Activated CD4-positive, alpha-beta memory T cell treated with anti-CD3 and anti-CD28 coated beads for 36 hours (primary cell): ENCODE measurements at regions of chr17 and their contacts with region 1.

Region 1: DNA sequence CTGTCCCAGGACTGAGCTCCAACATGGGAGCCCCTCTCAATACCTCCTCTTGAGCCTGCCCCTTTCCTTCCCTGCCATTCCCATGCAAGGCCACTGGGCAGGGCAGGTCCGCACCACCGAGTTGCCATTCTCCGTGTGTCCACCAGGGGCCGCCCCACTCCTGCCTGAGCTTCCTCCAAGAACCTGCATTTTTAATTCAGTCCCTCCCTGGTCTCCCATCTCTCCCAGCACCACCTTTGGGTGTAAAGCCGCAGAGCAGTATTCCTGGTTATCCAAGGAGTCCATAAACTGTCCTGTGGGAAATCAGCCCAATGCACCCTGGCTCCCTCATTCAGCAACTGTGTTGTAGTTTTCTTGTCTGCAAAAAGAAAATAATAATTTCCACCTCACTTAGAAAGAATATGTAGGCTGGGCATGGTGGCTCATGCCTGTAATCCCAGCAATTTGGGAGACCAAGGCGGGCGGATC is 15.9 kb upstream of the ANKRD40CL start:
- DNase-seq: peak; percentile 89
- H3K4me3 Mint-ChIP-seq: peak overlapping the region; percentile 17
- H3K27ac Mint-ChIP-seq: peak overlapping the region; percentile 49
- H3K4me1 Mint-ChIP-seq: peaks cover 22% of the 10 kb centered on the region
- H3K27me3 Mint-ChIP-seq: peaks cover 3% of the 10 kb centered on the region

Region 2: GRCh38 chr17:50754521-50754920 is 28.7 kb before region 1 on chr17:
- CTCF ChIA-PET with region 1: interaction called, 12 read pairs
- POLR2A ChIA-PET with region 1: no interaction called
- intact Hi-C with region 1: no loop called
- DNase-seq: no peak
- H3K4me3 Mint-ChIP-seq: no peak overlapping the region
- H3K27ac Mint-ChIP-seq: no peak overlapping the region
- H3K4me1 Mint-ChIP-seq: no peaks in the 10 kb centered on the region
- H3K27me3 Mint-ChIP-seq: no peaks in the 10 kb centered on the region

Region 3: DNA sequence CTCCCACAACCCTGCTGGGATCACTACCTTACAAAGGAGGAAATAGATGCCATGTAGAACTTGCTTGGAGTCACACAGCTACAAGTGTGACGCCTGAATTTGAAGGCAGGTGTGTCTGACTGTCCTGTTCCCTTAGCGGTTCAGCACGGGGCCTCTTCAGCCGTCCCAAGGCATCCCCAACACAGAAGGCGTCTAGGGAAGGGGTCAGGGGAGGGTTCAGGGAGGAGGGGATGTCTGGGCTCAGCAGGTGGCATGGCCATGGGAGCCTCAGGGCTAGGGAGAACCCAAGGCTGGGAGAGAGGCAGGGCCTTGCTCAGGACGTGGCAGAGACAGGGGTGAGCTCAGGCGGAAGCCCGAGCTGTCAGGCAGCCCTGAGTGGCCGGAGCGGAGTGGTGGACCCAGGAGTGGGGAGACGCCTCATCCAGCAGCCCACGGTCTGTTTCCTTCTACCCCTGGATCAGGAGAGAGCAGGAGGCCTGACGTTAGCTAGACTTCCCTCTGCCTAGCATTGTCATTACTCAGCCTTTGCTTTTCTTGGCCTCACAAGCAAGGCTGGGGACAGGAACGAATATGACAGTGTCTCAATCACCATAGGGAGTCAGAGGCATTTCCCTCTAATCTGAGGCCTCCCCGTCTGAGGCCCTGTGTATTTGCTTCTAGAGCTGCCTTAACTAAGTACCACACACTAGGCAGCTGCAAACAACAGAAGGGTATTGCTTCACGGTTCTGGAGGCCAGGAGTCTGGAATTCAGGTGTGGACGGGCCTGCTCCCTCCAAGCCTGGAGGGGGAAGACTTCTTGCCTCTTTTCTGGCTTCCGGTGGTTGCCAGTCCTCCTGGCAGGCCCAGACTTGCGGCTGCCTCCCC is 15.4 kb after region 1 on chr17:
- CTCF ChIA-PET with region 1: interaction called, 17 read pairs
- POLR2A ChIA-PET with region 1: no interaction called
- intact Hi-C with region 1: no loop called
- DNase-seq: no peak
- H3K4me3 Mint-ChIP-seq: no peak overlapping the region
- H3K27ac Mint-ChIP-seq: no peak overlapping the region
- H3K4me1 Mint-ChIP-seq: no peaks in the 10 kb centered on the region
- H3K27me3 Mint-ChIP-seq: no peaks in the 10 kb centered on the region

Region 4: DNA sequence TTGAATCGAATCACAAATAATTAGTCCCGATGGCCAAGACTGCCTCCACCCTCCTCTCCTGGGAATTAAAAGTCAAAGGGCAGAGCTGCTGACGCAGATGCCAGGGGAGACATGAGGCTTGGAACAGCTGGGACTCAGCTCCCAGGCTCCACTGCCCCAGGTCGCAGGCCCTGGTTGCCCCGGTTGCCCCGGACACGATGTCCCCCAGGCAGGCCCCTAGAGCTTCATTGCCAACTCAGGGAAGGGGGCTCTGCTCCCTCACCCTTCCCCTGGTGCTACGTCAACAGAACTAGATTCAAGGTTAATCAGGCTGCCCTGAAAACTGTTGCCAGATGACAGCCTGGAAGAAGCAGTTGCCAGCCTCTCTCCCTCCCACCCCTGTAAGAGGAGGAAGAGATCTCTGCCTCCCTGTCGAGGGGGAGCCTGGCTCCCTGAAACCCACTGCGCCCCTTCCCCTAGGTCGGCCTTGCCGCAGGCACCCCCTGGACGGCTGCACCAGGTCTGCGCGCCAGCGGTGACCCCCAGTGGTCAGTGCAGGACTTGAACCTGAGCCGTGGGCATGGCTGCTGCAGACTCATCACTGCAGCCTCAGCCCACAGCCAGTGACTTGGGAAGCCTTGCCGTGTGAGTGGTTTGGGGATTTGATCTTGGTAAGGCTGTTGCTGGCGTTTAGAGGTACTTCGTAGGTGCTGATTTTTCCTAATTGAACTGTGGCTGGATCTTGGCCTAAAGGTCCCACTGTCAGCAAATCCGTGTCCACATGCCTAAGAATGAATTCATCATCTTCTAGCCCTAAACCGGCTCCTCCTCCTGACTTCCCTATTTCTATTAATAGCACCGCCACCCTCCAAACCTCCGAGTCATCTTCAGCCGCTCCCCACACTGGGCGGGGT is 167.0 kb after region 1 on chr17:
- CTCF ChIA-PET with region 1: interaction called, 51 read pairs
- POLR2A ChIA-PET with region 1: interaction called, 3 read pairs
- intact Hi-C with region 1: no loop called
- DNase-seq: peak; percentile 72
- H3K4me3 Mint-ChIP-seq: no peak overlapping the region
- H3K27ac Mint-ChIP-seq: no peak overlapping the region
- H3K4me1 Mint-ChIP-seq: peaks cover 10% of the 10 kb centered on the region
- H3K27me3 Mint-ChIP-seq: no peaks in the 10 kb centered on the region

Region 5: DNA sequence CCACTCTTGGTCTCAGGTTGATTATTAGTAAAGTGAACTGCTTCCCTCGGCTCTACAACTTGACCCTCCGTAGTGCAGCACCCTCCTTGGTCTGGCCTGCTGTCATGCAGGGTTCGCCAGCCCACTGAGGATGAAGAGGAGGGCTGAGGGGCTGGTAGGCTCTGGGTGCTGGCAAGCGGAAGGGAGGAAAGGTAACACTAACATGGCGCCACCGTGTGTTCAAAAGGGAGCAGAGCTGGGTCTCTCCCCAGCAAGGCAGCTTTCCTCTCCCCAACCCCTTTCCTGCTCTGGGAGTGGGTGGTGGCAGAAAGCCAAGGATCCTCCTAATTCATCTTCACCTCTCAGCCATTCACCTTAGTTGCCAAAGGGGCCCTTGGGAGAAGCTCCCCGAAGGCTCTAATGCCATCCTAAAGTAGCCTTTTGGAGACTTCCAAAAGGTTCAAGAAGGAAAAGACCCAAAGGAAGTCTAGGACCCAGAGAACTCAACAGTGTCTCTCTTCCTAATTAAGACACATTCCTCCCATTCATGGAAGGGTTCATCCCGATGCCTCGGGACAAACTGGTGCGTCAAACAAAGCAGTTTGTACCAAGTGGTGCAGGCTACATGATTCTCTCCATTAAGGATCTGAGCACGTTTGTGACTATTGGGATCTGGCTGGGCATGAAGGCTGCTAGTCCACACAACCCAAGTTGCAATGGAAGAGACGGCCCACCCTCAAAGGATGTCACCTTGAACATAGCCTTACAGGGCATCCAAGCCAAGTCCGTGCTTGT is 173.7 kb after region 1 on chr17:
- CTCF ChIA-PET with region 1: interaction called, 51 read pairs
- POLR2A ChIA-PET with region 1: interaction called, 3 read pairs
- intact Hi-C with region 1: loop called (anchors 2 kb)
- DNase-seq: peak; percentile 77
- H3K4me3 Mint-ChIP-seq: no peak overlapping the region
- H3K27ac Mint-ChIP-seq: peak overlapping the region; percentile 44
- H3K4me1 Mint-ChIP-seq: peaks cover 2% of the 10 kb centered on the region
- H3K27me3 Mint-ChIP-seq: no peaks in the 10 kb centered on the region